Heart left ventricle (tissue), 16 donors: ENCODE measurements at regions of chr1 and their contacts with region 1.

Region 1: DNA sequence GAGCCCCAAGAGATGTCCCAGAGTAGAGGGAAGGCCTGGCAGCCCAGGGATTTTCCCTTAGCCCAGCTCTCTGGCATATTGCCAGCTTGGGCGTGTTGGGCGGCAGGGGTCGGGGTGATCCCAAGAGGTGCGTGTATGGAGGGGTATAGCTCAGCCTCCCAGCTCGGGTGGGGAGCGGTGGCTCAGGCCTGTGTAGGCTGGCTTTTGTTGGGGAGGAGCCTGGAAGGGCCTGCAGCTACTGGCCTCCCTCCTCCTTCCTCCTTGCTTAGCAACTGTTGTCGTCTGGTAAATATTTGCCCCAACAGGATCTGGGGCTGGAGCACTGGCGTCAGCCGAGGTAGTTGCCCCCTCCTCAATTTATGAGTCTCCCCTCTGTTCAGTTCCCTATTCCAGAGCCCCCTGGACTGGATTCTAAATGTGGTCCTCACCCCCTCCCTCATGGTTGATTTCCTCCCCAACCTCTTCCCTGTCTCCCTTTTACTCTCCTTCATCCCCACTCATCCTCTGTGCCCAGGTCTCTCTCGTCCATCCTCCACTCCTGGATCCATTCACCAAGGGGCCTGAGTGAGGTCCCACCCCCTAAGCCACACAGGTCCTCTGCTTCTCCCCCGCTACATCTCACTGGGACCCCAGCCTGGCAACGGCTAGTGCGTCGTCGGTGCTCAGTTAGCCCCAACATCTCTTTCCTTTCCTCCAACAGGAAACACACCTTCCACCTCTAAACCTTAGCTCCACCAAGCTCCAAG is 10.3 kb upstream of the LMNA start:
- DNase-seq: peak; percentile 78 to 87 (median 83)
- ATAC-seq: peak; percentile 63 to 74 (median 69)
- H3K4me3 ChIP-seq: peak overlapping the region in 4 of 12 donors; percentile 10 to 32 (median 26)
- H3K27ac ChIP-seq: peak overlapping the region; percentile 91 to 99 (median 96)
- H3K4me1 ChIP-seq: peaks cover 24 to 89% (median 62%) of the 10 kb centered on the region in 12 donors
- H3K27me3 ChIP-seq: no peaks in the 10 kb centered on the region
- CTCF ChIP-seq: no peak
- POLR2A ChIP-seq: no peak

Region 2: GRCh38 chr1:156062189-156062588 is 42.0 kb before region 1 on chr1:
- intact Hi-C with region 1: no loop called
- DNase-seq: peak in 1 of 5 donors; percentile 39
- ATAC-seq: no peak
- H3K4me3 ChIP-seq: no peak overlapping the region
- H3K27ac ChIP-seq: no peak overlapping the region
- H3K4me1 ChIP-seq: no peaks in the 10 kb centered on the region
- H3K27me3 ChIP-seq: no peaks in the 10 kb centered on the region
- CTCF ChIP-seq: no peak
- POLR2A ChIP-seq: no peak

Region 3: GRCh38 chr1:156123356-156124196 is 19.3 kb after region 1 on chr1:
- intact Hi-C with region 1: loop called in 2 of 10 experiments (anchors 2 kb)
- DNase-seq: peak; percentile 94 to 98 (median 97)
- ATAC-seq: peak; percentile 73 to 83 (median 80)
- H3K4me3 ChIP-seq: peak overlapping the region in 11 of 12 donors; percentile 15 to 100 (median 44)
- H3K27ac ChIP-seq: peak overlapping the region; percentile 96 to 100 (median 98)
- H3K4me1 ChIP-seq: peaks cover 70 to 100% (median 99%) of the 10 kb centered on the region in 12 donors
- H3K27me3 ChIP-seq: no peaks in the 10 kb centered on the region
- CTCF ChIP-seq: peak in 8 of 12 donors; percentile 15 to 48 (median 28)
- POLR2A ChIP-seq: peak; percentile 25 to 79

Region 4: GRCh38 chr1:156346636-156347035 is 242.4 kb after region 1 on chr1:
- intact Hi-C with region 1: no loop called
- DNase-seq: no peak
- ATAC-seq: no peak
- H3K4me3 ChIP-seq: no peak overlapping the region
- H3K27ac ChIP-seq: no peak overlapping the region
- H3K4me1 ChIP-seq: no peaks in the 10 kb centered on the region
- H3K27me3 ChIP-seq: peaks cover 0 to 16% (median 0%) of the 10 kb centered on the region in 9 donors
- CTCF ChIP-seq: no peak
- POLR2A ChIP-seq: no peak